ENCODE measurements at regions of chr5 and their contacts with region 1.

Region 1: GRCh38 chr5:64784451-64785025 is 15.8 kb downstream of the CWC27 start:
- DNase-seq: peak; percentile 77
- H3K4me3 Mint-ChIP-seq: no peak overlapping the region
- H3K27ac Mint-ChIP-seq: no peak overlapping the region
- H3K4me1 Mint-ChIP-seq: peaks cover 2% of the 10 kb centered on the region
- H3K27me3 Mint-ChIP-seq: no peaks in the 10 kb centered on the region

Region 2: DNA sequence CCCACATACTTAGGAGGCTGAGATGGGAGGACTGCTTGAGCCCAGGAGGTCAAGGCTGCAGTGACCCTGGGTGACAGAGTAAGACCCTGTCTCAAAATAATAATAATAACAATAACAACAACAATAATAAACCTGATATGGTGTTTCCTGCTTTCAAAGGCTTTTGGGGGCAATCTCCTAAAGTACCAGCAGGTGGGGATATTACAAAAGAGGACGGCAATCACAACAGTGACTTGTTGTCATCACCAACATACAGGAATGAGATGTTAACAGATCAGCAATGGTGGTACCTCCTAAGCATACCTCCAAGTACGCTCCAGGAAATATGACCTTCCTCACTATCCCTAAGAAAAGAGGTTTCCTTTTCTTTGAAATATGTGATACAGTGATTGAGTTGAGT is 710.0 kb before region 1 on chr5:
- CTCF ChIA-PET with region 1: no interaction called
- POLR2A ChIA-PET with region 1: no interaction called
- intact Hi-C with region 1: loop called (anchors 5 kb)
- DNase-seq: no peak
- H3K4me3 Mint-ChIP-seq: no peak overlapping the region
- H3K27ac Mint-ChIP-seq: no peak overlapping the region
- H3K4me1 Mint-ChIP-seq: no peaks in the 10 kb centered on the region
- H3K27me3 Mint-ChIP-seq: no peaks in the 10 kb centered on the region

Region 3: DNA sequence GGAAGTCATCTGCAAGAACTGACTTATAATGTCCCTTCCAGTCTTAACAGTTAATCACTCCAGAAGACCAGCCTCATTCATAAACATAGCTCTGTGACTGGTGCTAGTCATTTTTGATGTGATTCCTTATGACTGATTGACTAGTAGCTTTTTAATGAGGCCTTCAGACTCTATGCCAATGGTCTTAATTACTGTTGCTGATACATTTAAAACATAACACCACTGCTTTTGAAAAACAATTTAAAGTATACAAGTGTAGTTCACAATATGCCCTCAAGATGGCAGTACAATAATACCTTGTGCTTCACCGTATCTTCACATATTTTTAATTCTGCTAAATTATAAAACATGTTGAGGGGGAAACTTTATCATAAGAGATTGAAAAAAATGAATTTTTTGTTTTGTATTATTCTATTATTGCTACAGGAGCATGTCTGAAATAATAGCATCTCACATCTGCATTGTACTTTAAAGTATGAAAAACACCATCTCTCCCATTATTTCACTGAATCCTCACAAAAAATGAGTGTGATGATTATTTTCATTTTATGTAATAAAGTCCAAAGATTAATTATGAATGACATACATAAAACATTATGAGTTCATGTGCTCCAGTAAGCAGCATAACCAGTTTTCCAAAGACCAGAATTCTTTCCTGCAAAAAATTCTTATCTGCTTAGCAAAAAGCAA is 149.4 kb before region 1 on chr5:
- CTCF ChIA-PET with region 1: interaction called, 67 read pairs
- POLR2A ChIA-PET with region 1: no interaction called
- intact Hi-C with region 1: loop called (anchors 1 kb)
- DNase-seq: no peak
- H3K4me3 Mint-ChIP-seq: no peak overlapping the region
- H3K27ac Mint-ChIP-seq: no peak overlapping the region
- H3K4me1 Mint-ChIP-seq: no peaks in the 10 kb centered on the region
- H3K27me3 Mint-ChIP-seq: peaks cover 16% of the 10 kb centered on the region

Region 4: DNA sequence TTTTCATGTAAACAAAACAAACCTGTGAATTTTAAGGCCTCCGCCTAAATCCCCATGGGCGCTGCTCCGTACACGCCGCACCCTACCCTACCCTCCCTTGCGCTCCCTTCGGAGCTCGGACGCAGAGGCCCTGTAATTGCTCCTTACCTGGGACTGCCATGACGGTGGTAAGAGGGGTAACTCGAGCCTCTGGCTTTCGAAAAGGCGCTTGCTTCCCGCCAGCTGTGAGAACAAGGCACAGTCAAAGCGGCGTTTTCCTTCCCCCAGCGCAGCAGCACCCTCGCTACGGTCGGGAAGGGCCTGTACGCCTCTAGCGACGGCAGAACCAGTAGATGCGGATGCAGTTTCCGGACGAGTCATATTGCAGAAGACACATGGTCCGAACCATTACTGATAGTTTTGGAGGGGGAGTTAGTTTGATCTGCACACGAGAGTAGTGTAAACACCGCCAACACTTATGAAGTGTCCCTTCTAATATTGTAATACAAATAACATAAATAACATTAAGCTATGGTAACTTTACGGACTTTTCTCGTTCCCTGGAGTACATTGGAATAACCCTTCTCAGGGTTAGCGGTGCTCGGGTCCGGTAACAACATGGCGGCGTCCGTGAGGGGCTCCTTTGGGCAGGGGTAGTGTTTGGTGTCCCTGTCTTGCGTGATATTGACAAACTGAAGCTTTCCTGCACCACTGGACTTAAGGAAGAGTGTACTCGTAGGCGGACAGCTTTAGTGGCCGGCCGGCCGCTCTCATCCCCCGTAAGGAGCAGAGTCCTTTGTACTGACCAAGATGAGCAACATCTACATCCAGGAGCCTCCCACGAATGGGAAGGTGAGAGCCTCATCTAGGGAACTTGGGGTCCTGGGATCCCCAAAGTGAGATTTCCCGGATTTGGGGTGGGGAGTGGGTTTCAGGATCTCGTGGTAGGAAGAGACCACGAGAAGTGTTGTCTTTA is 15.9 kb before region 1 on chr5 and contains the starts of genes CWC27 and SREK1IP1:
- CTCF ChIA-PET with region 1: interaction called, 40 read pairs
- POLR2A ChIA-PET with region 1: no interaction called
- intact Hi-C with region 1: no loop called
- DNase-seq: peak; percentile 89
- H3K4me3 Mint-ChIP-seq: peak within 1 kb of the TSS; percentile 100
- H3K27ac Mint-ChIP-seq: peak within 1 kb of the TSS; percentile 94
- H3K4me1 Mint-ChIP-seq: peaks cover 43% of the 10 kb centered on the region
- H3K27me3 Mint-ChIP-seq: no peaks in the 10 kb centered on the region
- total RNA-seq, gene CWC27: 31.4 to 33.7 TPM
- total RNA-seq, gene SREK1IP1: 20.2 to 24.3 TPM

Measured in activated CD4-positive, alpha-beta memory T cell treated with anti-CD3 and anti-CD28 coated beads for 36 hours (primary cell).